ENCODE measurements at regions of chr5 and their contacts with region 1.

Region 1: DNA sequence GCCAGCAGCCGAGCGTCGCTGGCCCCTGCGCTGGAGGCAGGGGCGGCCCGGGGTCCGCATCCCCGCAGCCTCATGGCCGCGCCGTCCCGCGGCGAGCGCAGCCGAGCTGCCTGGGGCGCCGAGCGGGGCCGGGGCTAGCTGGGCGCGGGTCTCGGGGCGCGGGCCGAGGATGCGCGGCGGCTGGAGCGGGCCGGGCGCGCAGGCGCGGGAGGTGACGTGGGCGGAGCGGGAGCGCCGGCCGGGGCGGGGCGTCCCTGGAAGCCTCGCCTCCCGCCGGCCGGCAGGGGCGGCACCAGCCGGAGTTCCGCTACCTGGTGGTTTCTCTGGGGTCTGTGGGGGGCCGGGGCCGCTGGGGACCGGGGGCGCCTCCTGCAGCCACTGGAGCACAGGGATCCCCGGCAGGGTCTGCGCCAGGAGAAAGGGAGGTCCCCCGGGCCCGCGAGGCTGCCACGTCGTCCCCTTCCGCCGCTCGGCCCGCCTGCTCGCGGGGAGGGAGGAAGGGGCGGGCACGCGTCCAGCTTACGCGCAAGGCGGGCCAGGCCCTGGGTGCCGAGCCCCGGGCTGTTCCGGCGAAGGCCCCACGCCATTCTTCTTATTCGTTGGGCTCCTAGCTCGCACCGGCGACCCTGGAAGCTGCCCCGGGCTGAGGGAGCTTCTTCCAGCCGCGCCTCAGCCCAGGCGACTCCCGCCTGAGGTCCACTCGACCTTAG is at the start of gene LPCAT1:
- DNase-seq: peak; percentile 69 to 86 (median 79)
- H3K4me3 ChIP-seq: peak within 1 kb of the TSS; percentile 47 to 59
- H3K4me3 Mint-ChIP-seq: peak within 1 kb of the TSS; percentile 80 to 92 (median 88)
- H3K27ac ChIP-seq: peak within 1 kb of the TSS; percentile 70
- H3K27ac Mint-ChIP-seq: peak within 1 kb of the TSS in 6 of 7 donors; percentile 48 to 90 (median 72)
- H3K4me1 ChIP-seq: peaks cover 33% of the 10 kb centered on the region
- H3K4me1 Mint-ChIP-seq: peaks cover 13 to 33% (median 22%) of the 10 kb centered on the region in 4 donors
- H3K27me3 ChIP-seq: no peaks in the 10 kb centered on the region
- H3K27me3 Mint-ChIP-seq: no peaks in the 10 kb centered on the region
- total RNA-seq, gene LPCAT1: 62.8 to 63.6 TPM

Region 2: GRCh38 chr5:1536322-1536845 is 12.5 kb after region 1 on chr5:
- CTCF ChIA-PET with region 1: no interaction called
- POLR2A ChIA-PET with region 1: interaction called, 36 read pairs
- intact Hi-C with region 1: loop called (anchors 1 kb)
- DNase-seq: peak; percentile 67 to 89 (median 71)
- H3K4me3 ChIP-seq: peak overlapping the region; percentile 26 to 30
- H3K4me3 Mint-ChIP-seq: peak overlapping the region; percentile 77 to 90 (median 84)
- H3K27ac ChIP-seq: peak overlapping the region; percentile 72
- H3K27ac Mint-ChIP-seq: peak overlapping the region; percentile 88 to 98 (median 92)
- H3K4me1 ChIP-seq: peaks cover 26% of the 10 kb centered on the region
- H3K4me1 Mint-ChIP-seq: peaks cover 20 to 35% (median 28%) of the 10 kb centered on the region in 4 donors
- H3K27me3 ChIP-seq: no peaks in the 10 kb centered on the region
- H3K27me3 Mint-ChIP-seq: no peaks in the 10 kb centered on the region

Region 3: DNA sequence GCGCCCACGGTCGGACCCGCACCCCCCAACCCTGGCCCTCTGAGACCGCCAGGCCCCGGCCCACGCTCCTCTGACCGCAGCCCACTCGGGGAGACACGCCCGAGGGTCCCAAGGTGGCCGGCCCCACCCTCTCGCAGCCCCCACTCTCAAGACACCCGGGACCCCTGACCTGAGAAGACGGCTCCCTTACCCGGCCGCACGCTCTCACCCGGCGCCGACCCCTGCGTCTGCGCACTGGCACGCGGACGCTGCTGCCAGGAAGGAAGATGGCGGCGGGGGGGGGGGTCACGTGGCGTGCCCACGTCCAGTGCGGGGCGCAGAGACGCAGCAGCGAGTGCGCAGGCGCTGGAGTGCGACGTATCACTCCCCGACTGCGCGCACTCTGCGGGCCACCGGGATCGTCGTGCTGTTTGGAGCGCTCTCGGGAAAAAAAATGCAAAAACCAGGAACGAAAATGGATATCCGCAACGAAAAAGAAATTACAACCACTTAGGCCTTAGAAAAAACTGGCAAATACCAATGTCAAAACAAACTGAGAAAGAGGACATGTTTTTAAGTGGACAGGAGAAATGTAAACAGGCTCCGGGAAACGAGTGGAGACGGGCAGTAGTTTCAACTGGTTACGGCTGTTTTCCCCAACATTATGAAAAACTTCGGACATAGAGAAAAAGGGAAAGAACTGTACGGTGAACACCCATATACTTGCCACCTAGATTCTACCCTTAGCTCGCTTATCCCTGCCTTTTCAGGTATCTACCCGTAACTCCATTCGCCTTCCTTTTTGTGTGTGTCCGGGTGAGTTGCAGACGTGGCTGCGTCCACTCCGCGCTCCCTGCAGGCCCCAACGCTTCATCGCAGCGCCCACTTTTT is 275.9 kb after region 1 on chr5 and contains the start of gene MRPL36:
- CTCF ChIA-PET with region 1: no interaction called
- POLR2A ChIA-PET with region 1: no interaction called
- intact Hi-C with region 1: loop called (anchors 1 kb)
- DNase-seq: peak; percentile 84 to 92 (median 88)
- H3K4me3 ChIP-seq: peak within 1 kb of the TSS; percentile 93 to 97
- H3K4me3 Mint-ChIP-seq: peak within 1 kb of the TSS; percentile 94 to 99 (median 96)
- H3K27ac ChIP-seq: peak within 1 kb of the TSS; percentile 91
- H3K27ac Mint-ChIP-seq: peak within 1 kb of the TSS; percentile 92 to 100 (median 99)
- H3K4me1 ChIP-seq: peaks cover 61% of the 10 kb centered on the region
- H3K4me1 Mint-ChIP-seq: peaks cover 28 to 76% (median 48%) of the 10 kb centered on the region in 4 donors
- H3K27me3 ChIP-seq: no peaks in the 10 kb centered on the region
- H3K27me3 Mint-ChIP-seq: no peaks in the 10 kb centered on the region
- total RNA-seq, gene MRPL36: 30.7 to 34.8 TPM

Measured in CD4-positive, alpha-beta memory T cell (primary cell).